ENCODE measurements at regions of chr2 and their contacts with region 1.

Region 1: DNA sequence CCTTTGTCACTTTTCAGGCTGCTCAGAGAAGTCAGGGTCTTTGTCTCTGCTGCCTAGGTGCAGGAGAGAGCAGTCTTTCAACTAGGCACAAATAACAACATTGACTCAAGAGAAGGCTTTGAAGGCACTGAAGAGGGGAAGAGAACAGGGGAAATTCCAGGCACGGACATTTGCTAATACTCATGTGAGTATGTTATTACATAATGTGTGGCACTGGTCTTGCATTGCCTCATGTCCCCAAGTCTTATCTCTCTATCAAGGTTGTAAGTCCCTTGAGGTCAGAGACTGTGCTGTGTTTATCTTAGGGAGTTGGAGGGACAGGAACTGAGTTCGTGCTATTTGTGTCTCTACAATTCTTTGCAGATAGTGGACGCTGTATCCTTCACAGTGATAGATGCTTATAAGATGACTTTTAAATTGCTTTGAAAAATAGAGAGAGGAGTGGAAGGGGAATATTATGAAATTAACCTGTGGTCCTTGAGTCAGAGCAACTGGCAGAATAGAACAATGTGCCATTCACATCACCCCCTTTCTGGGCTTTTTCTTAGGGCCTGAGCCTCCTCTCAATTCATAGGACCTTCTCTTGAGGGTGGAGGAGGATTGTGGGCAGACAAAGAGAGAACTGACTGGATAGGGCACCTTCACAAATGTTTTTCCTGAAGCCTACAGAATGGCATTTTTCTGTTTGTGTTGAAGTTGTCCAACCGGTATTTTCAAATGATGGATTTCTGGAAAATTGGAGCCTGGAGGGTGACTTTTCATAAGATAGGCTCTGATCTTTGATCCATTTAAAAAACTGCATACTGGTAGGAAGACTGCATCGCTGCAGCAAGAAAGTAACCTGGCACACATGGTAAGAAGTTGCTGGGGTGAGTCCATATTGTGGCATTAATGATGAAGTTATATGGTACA is 96.6 kb upstream of the CXCR4 start:
- DNase-seq: no peak
- ATAC-seq: peak; percentile 65 to 69
- H3K4me3 ChIP-seq: no peak overlapping the region
- H3K27ac ChIP-seq: no peak overlapping the region
- H3K4me1 ChIP-seq: peaks cover 12% of the 10 kb centered on the region
- H3K27me3 ChIP-seq: no peaks in the 10 kb centered on the region
- CTCF ChIP-seq: no peak

Region 2: GRCh38 chr2:136154402-136154783 is 60.1 kb before region 1 on chr2:
- intact Hi-C with region 1: loop called (anchors 5 kb)
- DNase-seq: no peak
- ATAC-seq: no peak
- H3K4me3 ChIP-seq: no peak overlapping the region
- H3K27ac ChIP-seq: no peak overlapping the region
- H3K4me1 ChIP-seq: no peaks in the 10 kb centered on the region
- H3K27me3 ChIP-seq: no peaks in the 10 kb centered on the region
- CTCF ChIP-seq: no peak

Region 3: DNA sequence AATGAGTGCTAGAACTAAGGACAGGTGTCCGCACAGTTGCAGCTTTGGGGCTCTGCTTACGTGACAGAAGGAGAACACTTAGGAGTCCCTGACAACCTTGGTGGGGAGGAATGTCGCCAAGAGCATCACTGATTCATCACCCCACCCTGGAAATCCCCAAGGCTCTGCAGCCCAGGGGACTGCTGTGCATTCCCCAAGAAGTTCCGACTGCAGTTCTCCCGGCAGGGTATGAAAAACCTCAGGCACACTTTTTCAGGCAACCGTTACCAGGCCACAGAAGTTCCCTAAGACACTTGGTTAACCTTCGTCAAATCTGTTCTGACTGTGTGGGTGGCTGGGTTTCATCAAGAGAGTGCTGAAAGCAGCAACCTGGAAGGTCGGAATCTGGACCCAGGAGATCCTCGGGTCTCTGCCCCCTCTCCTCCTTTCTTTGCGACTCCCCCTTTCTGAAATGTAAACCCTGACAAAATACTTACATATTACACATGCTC is 95.5 kb after region 1 on chr2:
- intact Hi-C with region 1: no loop called
- DNase-seq: no peak
- ATAC-seq: no peak
- H3K4me3 ChIP-seq: no peak overlapping the region
- H3K27ac ChIP-seq: no peak overlapping the region
- H3K4me1 ChIP-seq: no peaks in the 10 kb centered on the region
- H3K27me3 ChIP-seq: no peaks in the 10 kb centered on the region
- CTCF ChIP-seq: no peak

Region 4: DNA sequence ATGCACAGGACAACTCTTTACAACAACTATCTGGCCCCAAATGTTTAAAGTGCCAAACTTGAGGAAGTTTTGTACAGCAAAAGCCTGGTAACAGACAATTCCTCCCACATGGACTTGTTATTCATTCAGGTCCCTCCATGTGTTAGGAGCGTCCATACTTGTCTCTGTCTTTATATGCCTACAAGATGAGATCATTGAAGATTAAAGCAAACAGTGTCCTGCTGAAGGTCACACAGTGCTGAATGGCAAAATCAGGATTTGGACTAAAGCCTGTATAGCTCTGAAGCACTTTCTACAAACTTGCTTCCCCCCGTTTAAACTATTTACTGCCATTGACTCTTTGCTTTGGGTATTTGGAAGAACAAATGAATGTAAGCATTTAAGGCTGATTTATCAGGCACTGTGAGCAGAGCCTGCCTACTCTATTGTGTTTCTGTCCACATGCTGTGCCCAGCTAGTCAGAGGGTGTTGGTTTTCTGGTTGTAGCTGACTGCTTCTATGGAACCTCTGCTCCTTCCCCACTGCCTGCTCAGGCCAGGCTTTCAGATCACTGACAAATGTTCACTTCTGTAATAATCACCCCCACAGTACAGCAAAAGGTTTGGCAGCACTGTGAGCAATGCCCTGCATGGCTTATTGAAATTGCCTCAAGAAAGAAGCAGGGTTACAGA is 825.1 kb after region 1 on chr2:
- intact Hi-C with region 1: no loop called
- DNase-seq: no peak
- ATAC-seq: no peak
- H3K4me3 ChIP-seq: no peak overlapping the region
- H3K27ac ChIP-seq: no peak overlapping the region
- H3K4me1 ChIP-seq: no peaks in the 10 kb centered on the region
- H3K27me3 ChIP-seq: no peaks in the 10 kb centered on the region
- CTCF ChIP-seq: no peak